ENCODE measurements at regions of chr4 and their contacts with region 1.

Region 1: GRCh38 chr4:337143-337931 is at the start of gene ZNF141:
- DNase-seq: peak; percentile 96
- total RNA-seq, gene ZNF141: 8.5 TPM

Region 2: DNA sequence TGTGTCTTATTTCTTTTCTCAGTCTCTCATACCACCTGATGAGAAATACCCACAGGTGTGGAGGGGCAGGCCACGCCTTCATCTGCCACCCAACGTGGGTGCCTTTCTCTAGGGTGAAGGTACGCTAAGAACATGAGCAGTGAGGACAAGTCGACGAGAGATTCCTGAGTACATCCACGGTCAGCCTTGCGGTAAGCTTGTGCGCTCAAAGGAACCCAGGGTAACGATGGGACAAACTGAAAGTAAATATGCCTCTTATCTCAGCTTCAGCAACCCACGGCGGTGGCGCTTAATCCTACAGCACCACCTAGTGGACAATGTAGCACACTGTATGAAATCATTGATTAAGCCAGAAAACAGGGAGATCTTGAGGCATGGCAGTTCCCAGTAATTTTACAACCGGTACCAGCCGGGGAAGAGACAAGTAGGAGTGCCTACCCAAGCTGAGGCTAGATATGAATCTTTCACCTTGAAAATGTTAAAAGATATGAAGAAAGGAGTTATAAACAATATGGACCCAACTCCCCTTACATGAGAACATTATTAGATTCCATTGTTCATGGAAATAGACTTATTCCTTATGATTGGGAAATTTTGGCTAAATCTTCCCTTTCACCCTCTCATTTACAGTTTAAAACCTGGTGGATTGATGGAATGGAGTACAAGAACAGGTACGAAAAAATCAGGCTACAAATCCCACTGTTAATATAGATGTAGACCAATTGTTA is 95.1 kb before region 1 on chr4:
- intact Hi-C with region 1: loop called (anchors 5 kb)
- DNase-seq: peak; percentile 79

Region 3: GRCh38 chr4:314296-314903 is 22.9 kb before region 1 on chr4:
- intact Hi-C with region 1: no loop called
- DNase-seq: no peak

Region 4: DNA sequence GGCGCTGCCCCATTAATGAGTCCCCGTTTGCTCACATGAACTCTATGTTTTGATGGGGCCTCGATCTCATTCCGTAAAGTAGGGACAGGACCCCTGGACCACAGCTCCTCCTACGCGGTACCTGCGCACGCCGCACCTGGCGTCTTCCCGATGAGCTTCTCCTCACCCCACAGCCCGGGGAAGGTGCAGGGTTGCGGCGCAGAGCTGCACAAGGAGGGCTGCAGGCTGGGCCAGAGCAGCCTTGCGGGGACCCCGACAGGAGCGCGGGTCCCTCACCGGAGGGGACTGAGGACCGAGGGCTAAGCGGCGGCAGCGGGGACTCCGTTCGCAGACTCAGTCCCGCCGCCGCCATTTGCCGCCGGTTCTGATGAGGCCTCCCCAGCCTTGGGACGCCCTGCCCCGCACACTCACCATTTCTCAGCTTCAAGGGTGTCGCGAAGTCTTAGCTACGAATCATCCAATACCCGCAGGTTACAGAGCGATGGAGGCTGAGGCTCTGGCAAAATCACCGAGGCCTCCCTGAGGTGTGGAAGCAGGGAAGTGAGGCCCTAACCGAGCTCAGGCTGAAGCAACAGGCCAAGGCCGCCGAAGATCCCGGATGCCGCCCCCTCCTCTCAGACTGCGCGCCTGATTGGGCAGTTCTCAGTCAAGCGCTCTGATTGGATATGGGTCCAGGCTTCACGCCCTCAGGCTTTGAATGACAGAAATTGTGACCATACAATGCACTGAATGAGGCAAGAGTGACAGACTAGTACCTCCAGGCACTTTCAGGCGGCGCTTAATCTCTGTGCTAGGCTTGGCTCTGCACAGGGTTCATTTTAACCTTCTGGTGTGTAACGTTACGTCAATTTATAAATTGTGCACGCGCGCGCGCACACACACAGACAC is 136.5 kb after region 1 on chr4:
- intact Hi-C with region 1: loop called (anchors 5 kb)
- DNase-seq: peak; percentile 97

Region 5: DNA sequence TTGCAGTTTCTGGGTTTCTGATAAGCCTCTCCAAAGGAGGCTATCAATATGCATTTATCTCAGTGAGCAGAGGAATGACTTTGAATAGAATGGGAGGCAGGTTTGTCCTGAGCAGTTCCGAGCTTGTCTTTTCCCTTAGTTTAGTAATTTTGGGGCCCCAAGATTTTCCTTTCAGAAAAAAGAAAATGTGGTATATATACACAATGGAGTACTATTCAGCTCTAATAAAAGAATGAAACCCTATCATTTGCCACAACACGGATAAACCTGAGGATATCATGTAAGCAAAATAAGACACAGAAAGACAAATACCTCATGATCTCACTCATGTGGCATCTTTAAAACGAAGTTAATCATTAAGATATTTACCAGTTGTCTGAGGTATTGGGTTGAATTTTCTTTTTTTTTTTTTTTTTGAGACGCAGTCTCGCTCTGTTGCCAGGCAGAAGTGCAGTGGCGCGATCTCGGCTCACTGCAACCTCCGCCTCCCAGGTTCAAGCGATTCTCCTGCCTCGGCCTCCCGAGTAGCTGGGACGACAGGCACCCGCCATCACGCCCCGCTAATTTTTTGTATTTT is 161.1 kb after region 1 on chr4:
- intact Hi-C with region 1: loop called (anchors 5 kb)
- DNase-seq: no peak

Region 6: DNA sequence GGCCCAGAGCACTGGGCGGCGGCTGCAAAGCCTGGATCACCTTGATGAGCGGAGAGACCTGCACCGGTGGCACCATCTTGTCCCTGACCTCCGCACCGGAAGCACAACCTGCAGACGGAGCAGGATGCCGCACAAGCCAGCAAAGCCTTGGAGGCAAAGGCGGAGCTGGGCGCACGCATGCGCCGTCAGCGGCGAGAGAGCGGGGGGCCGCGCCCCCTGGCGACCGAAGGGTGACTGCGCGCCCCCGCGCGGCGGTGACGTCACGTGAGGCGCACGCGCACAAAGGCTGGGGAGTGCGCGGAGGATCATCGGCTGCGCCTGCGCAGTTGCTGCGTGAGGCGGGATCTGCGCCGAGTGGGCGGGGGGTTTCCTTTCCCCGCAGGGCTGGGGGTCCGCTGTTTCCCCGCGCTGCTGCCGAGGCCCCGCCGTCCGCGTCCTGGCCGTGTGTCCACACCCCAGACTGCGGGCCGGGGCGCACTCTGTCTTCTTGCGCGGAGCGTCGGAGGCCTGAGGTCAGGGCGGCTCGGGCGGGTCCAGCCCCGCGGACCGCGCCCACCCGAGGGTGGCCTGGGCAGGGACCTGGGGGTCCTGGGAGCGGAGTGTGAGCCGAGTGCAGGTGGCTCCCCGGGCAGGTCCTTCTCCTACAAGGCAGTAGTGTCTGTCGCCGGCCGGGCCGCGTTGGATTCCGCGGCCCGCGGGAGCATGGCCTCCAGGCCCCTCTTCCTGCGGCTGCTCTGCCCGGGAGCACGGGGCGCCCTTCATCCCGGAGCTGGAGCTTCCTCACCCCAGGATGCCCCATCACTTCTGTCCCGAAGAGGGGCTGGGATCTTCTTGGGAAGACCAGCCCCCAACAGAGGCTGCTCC is 337.1 kb after region 1 on chr4 and contains the starts of genes ATP5ME and MYL5:
- intact Hi-C with region 1: loop called (anchors 10 kb)
- DNase-seq: peak; percentile 99
- total RNA-seq, gene ATP5ME: 734 TPM
- total RNA-seq, gene MYL5: 6.5 TPM

Measured in cardiac septum (tissue), 1 donor.